Motor neuron (in vitro differentiated cells): ENCODE measurements at regions of chr9 and their contacts with region 1.

Region 1: DNA sequence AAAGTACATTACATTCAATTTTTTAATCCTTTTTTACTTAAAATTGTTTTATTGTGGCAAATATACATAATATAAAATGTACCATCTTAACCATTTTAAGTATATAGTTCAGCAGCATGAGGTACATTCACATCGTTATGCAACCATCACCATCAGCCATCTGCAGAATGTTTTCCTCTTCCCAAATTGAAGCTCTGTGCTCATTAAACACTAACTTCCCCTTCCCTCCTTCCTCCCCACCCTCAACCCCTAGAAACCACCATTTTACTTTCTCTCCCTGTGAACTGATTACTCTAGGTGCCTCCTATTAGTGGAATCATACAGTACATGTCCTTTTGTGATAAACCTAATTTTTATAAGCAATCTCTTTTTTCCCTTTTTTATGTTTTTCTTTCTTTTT is 15.6 kb downstream of the TEX53 start:
- ATAC-seq: no peak
- H3K4me3 ChIP-seq: no peak overlapping the region
- H3K27ac ChIP-seq: no peak overlapping the region
- H3K4me1 ChIP-seq: peaks cover 0 to 5% of the 10 kb centered on the region in 2 donors

Region 2: DNA sequence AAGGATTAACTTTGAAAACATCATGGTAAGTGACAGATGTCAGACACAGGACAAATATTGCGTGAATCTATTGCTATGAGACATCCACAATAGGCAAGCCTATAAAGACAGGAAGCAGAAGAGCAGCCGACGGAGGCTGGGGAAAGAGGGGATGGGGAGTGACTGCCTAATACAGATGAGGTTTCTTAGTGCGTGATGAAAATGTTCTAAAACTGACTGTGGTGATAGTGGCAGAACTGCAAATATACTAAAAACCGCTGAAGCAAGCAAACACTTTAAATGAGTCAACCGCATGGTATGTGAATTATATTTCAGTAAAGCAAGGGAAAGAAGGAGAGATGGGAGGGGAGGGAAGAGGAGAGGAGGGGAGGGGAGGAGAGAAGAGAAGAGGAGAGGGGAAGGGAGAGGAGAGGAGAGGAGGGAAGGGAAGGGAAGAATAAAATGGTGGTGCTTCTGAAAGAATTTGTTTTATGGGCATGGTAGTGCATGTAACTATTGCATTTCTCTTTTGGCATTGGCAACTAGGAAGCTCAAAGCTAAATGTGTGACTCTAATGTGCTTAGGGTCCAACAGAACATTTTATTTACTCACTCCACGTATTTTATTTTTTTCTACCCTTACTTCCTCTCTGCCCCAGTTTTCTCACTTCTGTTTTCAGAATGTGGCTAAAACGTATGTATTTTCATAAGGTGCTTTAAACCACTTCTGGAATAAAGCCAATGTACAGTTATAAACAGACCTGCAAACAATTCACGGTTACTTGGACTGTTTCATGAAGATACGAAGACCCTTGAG is 275.4 kb before region 1 on chr9:
- in situ Hi-C with region 1: no loop called
- ATAC-seq: peak in 2 of 8 experiments; percentile 37 to 56
- H3K4me3 ChIP-seq: no peak overlapping the region
- H3K27ac ChIP-seq: no peak overlapping the region
- H3K4me1 ChIP-seq: peaks cover 18 to 20% of the 10 kb centered on the region in 2 donors

Region 3: DNA sequence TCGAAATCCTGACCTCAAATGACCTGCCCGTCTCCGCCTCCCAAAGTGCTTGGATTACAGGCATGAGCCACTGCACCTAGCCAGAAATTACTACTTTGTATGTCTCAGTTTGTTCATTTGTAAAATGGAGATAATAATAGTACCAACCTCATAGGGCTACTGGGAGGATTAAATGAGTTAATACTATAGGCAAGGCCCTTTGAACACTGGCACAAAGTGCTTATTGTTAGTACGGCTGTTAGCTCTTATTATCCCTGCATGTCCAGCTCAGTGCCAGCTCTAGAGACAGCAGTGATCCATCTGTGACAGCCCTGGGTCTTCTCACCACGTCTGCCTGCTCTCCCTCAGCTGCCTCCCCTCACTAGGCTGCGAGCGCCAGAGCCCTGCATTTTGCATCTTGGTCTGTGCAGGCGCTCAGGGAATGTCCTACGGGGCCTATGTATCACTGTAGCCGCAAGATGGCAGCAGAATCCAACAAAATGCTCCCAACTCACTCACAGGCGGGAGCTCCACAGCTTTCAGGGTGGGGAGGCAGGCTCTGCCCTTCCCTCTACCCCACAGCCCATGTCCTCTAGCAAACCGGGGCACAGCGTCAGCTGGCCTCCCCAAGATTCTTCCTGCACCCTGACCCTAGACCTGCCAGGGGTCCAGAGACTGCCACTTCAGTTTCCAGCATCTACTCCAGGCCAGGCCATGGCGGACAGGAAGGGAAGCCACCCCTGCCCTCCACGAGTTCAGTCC is 236.5 kb before region 1 on chr9:
- in situ Hi-C with region 1: loop called in 1 of 9 experiments (anchors 25 kb)
- ATAC-seq: peak; percentile 85 to 97 (median 92)
- H3K4me3 ChIP-seq: no peak overlapping the region
- H3K27ac ChIP-seq: no peak overlapping the region
- H3K4me1 ChIP-seq: peaks cover 0 to 13% of the 10 kb centered on the region in 2 donors

Region 4: DNA sequence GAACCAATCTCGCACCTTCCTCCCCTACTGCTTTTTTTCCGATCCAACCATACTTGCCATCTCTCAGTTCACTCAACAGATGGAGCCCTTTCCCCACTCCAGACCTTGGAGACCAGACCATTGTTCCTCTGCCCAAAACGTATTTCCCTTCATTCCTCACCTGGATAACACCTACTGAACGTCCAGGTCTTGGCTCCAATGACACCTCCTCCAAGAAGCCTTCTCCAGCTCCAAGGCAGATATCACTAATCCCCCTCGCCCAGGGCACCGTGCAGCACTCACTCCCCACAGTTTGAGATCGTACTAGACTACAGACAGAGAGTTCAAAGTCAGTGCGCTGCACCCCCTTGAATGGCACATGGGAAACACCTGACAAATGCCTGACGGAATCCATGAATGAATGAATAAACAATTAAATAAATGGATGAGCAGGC is 207.1 kb before region 1 on chr9:
- in situ Hi-C with region 1: loop called in 2 of 9 experiments (anchors 25 kb)
- ATAC-seq: peak; percentile 35 to 89 (median 65)
- H3K4me3 ChIP-seq: no peak overlapping the region
- H3K27ac ChIP-seq: no peak overlapping the region
- H3K4me1 ChIP-seq: no peaks in the 10 kb centered on the region

Region 5: GRCh38 chr9:115024969-115025427 is 383.0 kb after region 1 on chr9:
- in situ Hi-C with region 1: no loop called
- ATAC-seq: peak in 1 of 8 experiments; percentile 19
- H3K4me3 ChIP-seq: no peak overlapping the region
- H3K27ac ChIP-seq: no peak overlapping the region
- H3K4me1 ChIP-seq: peaks cover 5 to 7% of the 10 kb centered on the region in 2 donors